AG04449 (cell line): ENCODE measurements at regions of chr6 and their contacts with region 1.

Region 1: GRCh38 chr6:32047850-32048766 is 9.9 kb downstream of the CYP21A2 start:
- DNase-seq: no peak
- H3K4me3 ChIP-seq: no peak overlapping the region
- CTCF ChIP-seq: peak; percentile 88

Region 2: DNA sequence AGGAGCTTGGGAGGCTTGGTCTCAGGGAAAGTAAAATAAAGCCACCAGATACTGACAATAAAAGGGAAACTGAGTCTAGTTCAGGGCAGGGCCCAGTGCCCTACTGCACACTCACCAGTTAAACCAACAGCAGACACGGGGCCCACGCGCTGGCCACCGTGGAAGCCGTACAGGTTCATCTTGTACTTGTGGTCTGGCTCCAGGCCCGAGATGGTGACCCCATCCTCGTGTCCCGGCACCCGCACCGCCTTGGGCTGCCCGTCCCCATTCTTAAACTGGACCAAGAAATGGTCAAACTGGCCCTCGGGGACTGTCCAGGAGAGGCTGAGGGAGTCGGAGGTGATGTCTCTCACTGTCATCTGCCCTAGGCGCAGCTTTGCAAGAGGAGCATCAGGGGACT is 16.6 kb after region 1 on chr6:
- CTCF ChIA-PET with region 1: interaction called, 39 read pairs
- POLR2A ChIA-PET with region 1: no interaction called
- DNase-seq: no peak
- H3K4me3 ChIP-seq: no peak overlapping the region
- CTCF ChIP-seq: no peak

Region 3: DNA sequence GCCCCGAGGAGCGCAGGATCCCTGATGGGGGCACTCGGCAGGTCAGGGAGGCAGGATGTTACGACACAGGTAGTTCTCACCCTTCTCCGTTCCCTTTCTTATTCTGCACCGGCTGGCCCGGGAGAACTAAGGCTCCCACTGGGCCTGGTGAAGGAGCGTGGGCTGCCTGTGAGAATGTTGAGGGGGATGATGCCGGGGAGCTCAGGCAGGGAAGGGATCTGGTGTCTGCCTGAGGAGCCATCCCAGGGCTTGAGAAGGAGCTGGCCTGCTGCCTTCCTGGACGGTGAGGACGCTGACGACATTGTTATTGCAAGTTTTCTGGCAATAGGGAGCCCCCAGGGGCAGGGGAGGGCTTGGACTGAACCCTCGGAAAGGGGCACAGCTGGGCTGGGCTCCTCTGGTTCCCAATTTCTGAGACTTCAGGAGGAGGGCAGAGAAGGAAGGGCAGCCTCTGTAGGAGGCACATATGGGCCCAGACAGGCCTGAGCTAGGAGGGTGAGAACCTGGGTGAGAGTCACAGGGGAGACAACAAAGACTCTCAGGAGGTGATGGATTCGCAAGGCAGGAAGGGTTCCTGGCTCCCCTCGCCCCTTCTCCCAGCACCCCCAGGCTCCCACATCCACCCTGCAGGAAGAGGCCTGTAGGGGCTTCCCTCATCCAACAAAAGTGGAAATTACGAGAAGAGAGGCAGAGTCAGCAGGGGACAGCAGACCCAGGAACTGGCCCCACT is 22.9 kb after region 1 on chr6:
- CTCF ChIA-PET with region 1: interaction called, 39 read pairs
- POLR2A ChIA-PET with region 1: no interaction called
- DNase-seq: no peak
- H3K4me3 ChIP-seq: no peak overlapping the region
- CTCF ChIP-seq: no peak

Region 4: DNA sequence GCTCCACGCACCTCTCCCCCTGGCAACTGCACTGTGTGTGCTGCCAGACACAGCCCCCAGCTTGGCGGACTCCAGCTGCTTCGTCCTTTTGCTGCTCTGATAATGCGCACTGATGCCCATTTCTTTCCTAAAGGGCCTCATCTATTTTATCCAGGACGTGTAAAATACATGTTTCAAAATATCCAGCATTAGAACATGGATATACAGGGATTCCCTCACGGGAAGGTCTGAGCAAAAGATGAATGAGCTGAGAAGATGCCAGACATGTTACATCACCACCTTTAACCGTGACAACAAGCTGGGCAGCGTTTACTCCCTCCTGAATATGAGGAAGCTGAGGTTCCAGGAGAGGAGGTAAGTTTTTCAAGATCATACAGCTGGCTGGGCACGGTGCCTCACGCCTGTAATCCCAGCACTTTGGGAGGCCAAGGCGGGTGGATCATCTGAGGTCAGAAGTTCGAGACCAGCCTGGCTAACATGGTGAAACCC is 28.3 kb after region 1 on chr6:
- CTCF ChIA-PET with region 1: interaction called, 26 read pairs
- POLR2A ChIA-PET with region 1: no interaction called
- DNase-seq: no peak
- H3K4me3 ChIP-seq: no peak overlapping the region
- CTCF ChIP-seq: no peak

Region 5: DNA sequence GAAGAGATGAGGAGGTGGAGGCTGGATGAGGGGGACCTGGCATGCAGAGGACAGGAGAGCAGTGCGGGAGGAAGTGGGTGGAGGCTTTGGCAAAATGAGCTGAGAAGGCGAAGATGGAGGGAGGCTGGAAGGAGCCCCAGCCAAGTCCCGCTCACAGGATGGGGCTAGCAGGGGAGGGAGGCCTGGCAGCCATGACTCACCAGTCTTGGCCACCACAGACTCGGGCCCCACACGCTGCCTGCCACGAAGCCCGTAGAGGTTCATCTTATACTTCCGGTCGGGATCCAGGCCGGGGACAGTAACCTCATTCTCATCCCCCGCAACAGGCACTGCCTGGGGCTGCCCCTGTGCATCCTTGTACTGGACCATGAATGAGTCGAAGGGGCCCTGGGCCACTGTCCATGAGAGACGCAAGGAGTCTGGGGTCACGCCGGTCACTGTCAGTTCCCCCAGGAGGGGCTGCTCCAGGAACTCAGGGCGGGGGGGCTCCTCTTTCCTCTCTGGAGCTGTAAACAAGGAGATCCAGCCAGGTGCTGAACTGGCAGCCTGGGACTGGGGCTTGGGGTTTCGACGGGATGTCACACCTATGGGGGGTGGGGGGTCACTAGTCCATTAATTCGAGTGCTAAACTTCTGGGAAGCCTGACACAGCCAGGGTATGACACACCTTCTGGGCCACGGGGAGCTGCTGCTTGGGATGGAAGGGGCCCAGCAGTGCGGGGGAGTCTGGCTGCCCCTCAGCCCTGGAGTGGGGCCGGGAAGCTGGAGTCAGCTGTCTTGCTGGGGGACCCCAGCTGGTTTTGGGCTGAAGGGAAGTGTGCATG is 33.3 kb after region 1 on chr6:
- CTCF ChIA-PET with region 1: interaction called, 26 read pairs
- POLR2A ChIA-PET with region 1: no interaction called
- DNase-seq: no peak
- H3K4me3 ChIP-seq: no peak overlapping the region
- CTCF ChIP-seq: no peak

Region 6: DNA sequence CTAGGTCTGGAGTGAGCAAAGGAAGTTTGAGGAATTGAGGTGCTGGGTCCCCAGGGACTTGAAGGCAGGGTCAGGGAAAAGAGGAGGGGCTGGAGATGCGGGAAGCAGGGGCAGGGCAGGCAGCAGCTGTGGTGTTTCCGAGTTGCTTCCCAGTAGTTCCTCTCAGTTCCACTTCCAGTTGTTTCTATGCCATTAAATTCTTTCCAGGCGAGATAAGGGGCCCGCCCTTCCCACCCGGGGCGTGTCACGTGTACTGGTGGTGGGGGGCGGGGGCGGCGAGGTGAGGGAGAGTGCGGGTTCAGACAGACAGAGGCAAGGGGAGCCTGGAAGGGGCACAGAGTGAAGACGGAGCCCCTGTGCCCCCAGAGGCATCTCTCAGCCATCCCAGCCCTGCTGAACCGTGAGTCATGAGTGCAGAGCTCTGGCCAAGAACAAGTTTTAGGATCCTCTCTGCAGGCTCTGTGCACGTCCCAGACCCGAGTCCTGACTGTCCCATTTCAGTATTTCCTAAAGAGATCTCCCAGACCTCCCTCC is 60.1 kb after region 1 on chr6:
- CTCF ChIA-PET with region 1: interaction called, 14 read pairs
- POLR2A ChIA-PET with region 1: no interaction called
- DNase-seq: no peak
- H3K4me3 ChIP-seq: no peak overlapping the region
- CTCF ChIP-seq: no peak

Region 7: DNA sequence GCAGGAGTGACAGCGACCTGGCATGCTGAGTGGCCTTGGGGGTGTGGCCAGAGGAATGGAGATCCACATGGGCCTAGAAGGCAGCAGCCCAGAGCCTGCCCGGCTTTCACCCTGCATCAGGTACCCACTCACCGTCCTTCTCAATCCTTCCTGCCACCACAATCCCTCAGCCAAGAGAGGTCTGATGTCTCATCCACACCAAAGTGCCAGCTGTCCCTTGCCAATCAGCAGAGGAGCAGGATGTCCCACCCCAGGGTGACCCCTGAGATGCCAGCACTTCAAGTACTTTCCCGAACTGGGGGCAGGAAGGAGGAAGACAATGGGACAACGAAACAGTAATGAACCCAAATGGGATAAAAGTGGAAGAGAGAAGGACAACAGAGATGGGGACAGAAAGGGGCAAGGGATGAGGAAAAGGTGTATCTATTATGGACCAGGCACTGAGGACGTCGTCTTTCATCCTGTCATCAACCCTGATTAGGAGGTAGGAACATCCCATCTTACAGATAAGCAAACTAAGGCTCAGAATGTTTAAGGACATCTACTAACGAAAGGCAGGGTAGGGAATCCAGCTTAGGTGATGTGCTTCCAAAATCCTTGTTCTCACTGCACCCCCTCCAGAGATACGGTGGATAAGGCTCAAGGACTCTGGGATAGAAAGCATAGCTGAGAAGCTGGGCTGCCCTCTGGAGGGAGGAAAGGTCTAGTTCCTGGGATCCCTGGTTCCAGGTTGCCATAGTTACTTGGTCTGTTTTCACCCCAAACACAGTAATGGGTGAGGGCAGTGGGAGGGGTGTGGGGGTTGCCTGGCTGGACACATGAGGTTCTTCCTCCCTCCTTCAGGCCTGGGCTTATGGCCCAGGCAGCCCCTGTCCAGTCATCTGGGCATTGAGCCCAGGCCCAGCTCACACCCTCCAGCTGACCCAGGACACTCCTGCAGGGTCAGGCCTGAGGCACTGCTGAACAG is 65.6 kb after region 1 on chr6:
- CTCF ChIA-PET with region 1: interaction called, 37 read pairs
- POLR2A ChIA-PET with region 1: no interaction called
- DNase-seq: peak; percentile 46
- H3K4me3 ChIP-seq: no peak overlapping the region
- CTCF ChIP-seq: peak; percentile 63